SK-N-SH (cell line): ENCODE measurements at regions of chr9 and their contacts with region 1.

Region 1: GRCh38 chr9:35553670-35554543 is 51.2 kb upstream of the TESK1 start:
- DNase-seq: peak; percentile 84
- H3K4me3 ChIP-seq: peak overlapping the region in 1 of 2 experiments; percentile 17; a peak in 1 of 4 replicates
- H3K27ac ChIP-seq: peak overlapping the region in 1 of 2 experiments; percentile 38; a peak in 2 of 4 replicates
- H3K4me1 ChIP-seq: peaks cover 0 to 5% of the 10 kb centered on the region in 2 experiments; a peak in 2 of 4 replicates
- H3K27me3 ChIP-seq: no peaks in the 10 kb centered on the region
- CTCF ChIP-seq: peak; percentile 93
- EP300 ChIP-seq: no peak
- RAD21 ChIP-seq: peak; percentile 97

Region 2: DNA sequence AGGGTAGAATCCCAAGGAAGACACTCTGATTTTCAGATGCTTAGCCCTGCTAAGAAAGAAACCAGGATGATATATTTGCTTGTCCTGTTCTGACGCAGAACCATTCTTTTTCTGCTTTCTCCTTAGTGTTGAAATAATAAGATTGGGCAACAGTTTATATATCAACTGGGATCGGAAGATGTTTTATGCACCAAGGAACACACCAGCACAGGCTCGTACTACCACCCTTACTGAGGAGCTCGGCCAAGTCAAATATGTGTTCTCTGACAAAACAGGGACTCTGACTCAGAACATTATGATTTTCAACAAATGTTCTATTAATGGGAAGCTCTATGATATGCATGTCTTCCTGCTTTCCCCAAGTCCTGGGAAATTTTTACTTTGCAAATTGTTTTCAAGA is 83.0 kb before region 1 on chr9:
- CTCF ChIA-PET with region 1: interaction called, 42 read pairs
- POLR2A ChIA-PET with region 1: no interaction called
- DNase-seq: no peak
- H3K4me3 ChIP-seq: no peak overlapping the region
- H3K27ac ChIP-seq: 0 out of 4 replicates have a peak overlapping the region, but pooled peaks of 1 of the 2 experiments have one; percentile 34
- H3K4me1 ChIP-seq: no peaks in the 10 kb centered on the region
- H3K27me3 ChIP-seq: no peaks in the 10 kb centered on the region; the same call in 1 of the 2 replicates
- CTCF ChIP-seq: no peak
- EP300 ChIP-seq: no peak
- RAD21 ChIP-seq: no peak

Region 3: GRCh38 chr9:35489313-35490154 is 64.4 kb before region 1 on chr9 and contains the start of gene RUSC2:
- CTCF ChIA-PET with region 1: interaction called, 45 read pairs
- POLR2A ChIA-PET with region 1: interaction called, 3 read pairs
- DNase-seq: peak; percentile 88
- H3K4me3 ChIP-seq: peak within 1 kb of the TSS; percentile 61 to 85
- H3K27ac ChIP-seq: peak within 1 kb of the TSS; percentile 81 to 82
- H3K4me1 ChIP-seq: peaks cover 7 to 24% of the 10 kb centered on the region in 2 experiments
- H3K27me3 ChIP-seq: no peaks in the 10 kb centered on the region
- CTCF ChIP-seq: peak; percentile 57
- EP300 ChIP-seq: no peak
- RAD21 ChIP-seq: peak; percentile 58
- polyA plus RNA-seq, gene RUSC2: 14.5 and 15.0 TPM in 2 replicates

Region 4: GRCh38 chr9:35508069-35508468 is 45.8 kb before region 1 on chr9:
- CTCF ChIA-PET with region 1: interaction called, 16 read pairs
- POLR2A ChIA-PET with region 1: no interaction called
- DNase-seq: no peak
- H3K4me3 ChIP-seq: no peak overlapping the region
- H3K27ac ChIP-seq: no peak overlapping the region
- H3K4me1 ChIP-seq: peaks cover 0 to 18% of the 10 kb centered on the region in 2 experiments; a peak in 2 of 4 replicates
- H3K27me3 ChIP-seq: no peaks in the 10 kb centered on the region
- CTCF ChIP-seq: no peak
- EP300 ChIP-seq: no peak
- RAD21 ChIP-seq: no peak

Region 5: GRCh38 chr9:35538361-35539234 is 15.3 kb before region 1 on chr9:
- CTCF ChIA-PET with region 1: interaction called, 37 read pairs
- POLR2A ChIA-PET with region 1: no interaction called
- DNase-seq: peak; percentile 86
- H3K4me3 ChIP-seq: peak overlapping the region; percentile 56 to 64
- H3K27ac ChIP-seq: peak overlapping the region; percentile 87 to 91
- H3K4me1 ChIP-seq: peaks cover 5 to 27% of the 10 kb centered on the region in 2 experiments; a peak in 3 of 4 replicates
- H3K27me3 ChIP-seq: no peaks in the 10 kb centered on the region
- CTCF ChIP-seq: no peak
- EP300 ChIP-seq: no peak; a peak in 2 of 4 replicates
- RAD21 ChIP-seq: no peak; the same call in 1 of the 2 replicates

Region 6: GRCh38 chr9:35636135-35636876 is 82.4 kb after region 1 on chr9:
- CTCF ChIA-PET with region 1: no interaction called
- POLR2A ChIA-PET with region 1: no interaction called
- DNase-seq: no peak
- H3K4me3 ChIP-seq: no peak overlapping the region
- H3K27ac ChIP-seq: no peak overlapping the region
- H3K4me1 ChIP-seq: no peaks in the 10 kb centered on the region
- H3K27me3 ChIP-seq: no peaks in the 10 kb centered on the region
- CTCF ChIP-seq: no peak
- EP300 ChIP-seq: no peak
- RAD21 ChIP-seq: no peak